ENCODE measurements at regions of chr11 and their contacts with region 1.

Region 1: DNA sequence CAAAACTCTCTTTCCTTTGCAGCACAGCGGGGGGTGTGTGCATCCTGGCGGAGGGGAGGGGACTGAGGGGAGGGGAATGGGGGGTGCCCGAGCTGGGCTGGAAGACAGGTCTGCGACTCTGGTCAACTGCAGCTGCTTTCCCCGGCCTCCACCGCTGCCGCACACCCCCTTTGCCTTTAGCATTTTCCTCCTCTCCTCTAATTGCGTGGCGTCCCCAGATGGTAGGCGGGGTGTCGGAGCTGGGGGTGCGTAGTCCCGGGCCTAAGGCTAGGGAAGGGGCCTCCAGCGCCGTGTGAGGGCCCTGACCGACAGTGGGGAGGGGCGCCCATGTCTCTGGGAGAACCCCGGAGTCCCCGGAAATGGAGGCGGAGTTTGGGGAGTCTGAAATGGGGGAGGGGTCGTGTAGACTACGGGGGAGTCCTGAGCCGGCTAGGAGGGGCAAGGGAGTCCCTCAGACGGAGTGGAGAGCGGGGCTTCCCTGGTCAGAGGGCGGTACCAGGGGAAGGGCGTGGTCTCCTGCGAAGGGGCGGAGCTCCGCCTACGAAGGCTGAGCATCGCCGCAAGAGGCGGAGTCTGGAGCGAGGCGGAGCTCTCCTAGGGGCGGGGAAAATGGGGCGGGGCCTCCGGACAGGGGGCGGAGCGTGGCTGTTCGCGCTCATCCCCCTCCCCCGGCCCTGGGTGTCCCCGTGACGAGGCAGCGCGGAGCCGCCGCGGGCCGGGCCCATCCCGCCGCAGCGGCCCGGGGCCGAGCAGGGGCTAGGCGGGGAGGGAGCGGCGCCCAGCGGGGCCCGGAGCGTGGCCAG is at the start of gene PELI3:
- DNase-seq: peak; percentile 86 to 95 (median 92)
- ATAC-seq: peak; percentile 97
- H3K4me3 ChIP-seq: peak within 1 kb of the TSS; percentile 78
- H3K4me3 Mint-ChIP-seq: peak within 1 kb of the TSS; percentile 89 to 96 (median 90)
- H3K27ac ChIP-seq: peak within 1 kb of the TSS; percentile 87
- H3K27ac Mint-ChIP-seq: peak within 1 kb of the TSS; percentile 87 to 97 (median 93)
- H3K4me1 ChIP-seq: peaks cover 8 to 10% of the 10 kb centered on the region in 2 donors
- H3K4me1 Mint-ChIP-seq: peaks cover 4 to 39% (median 24%) of the 10 kb centered on the region in 7 donors
- H3K27me3 ChIP-seq: no peaks in the 10 kb centered on the region
- H3K27me3 Mint-ChIP-seq: no peaks in the 10 kb centered on the region
- total RNA-seq, gene PELI3: 10.6 to 27.3 (median 18.6) TPM

Region 2: DNA sequence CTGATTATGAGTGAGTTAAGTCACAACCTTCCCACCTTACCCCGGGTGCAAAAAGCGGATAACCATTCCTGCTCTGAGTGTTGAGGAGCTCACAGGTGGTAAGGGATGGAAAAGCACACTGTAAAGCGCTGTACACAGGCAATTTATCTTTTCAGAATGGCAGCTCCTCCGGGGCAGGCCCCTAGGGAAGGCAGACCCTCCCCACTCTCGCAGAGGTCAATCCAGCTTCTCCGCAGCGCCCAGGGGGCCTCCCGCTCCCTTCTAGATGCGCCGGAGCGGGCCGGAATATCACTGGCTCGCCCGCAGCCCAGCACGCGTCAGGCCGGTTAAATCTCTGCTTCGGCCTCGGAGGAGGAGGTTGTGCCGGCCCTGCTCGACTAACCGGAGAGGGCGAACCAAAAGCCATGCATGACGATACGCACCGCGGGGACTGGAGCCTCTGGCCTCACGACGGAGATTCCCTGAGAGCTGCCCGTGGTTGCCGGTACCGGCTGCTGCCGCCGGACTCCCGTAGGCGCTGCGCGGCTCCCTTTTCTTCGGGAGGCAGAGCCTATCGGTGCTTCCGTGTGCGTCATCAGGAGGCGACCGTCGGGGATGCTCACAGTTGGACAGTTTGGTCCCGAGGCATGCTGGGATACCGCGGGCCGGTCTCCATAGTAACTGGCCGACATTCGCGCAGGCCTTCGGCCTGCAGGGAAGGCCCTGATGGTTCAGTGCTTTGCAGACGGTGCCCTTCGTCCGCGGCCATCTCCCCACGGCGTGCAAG is 121.7 kb before region 1 on chr11 and contains the start of gene BRMS1:
- CTCF ChIA-PET with region 1: no interaction called
- POLR2A ChIA-PET with region 1: no interaction called
- intact Hi-C with region 1: loop called in 1 of 2 experiments (anchors 1 kb)
- DNase-seq: peak; percentile 85 to 98 (median 93)
- ATAC-seq: peak; percentile 94
- H3K4me3 ChIP-seq: peak within 1 kb of the TSS; percentile 73
- H3K4me3 Mint-ChIP-seq: peak within 1 kb of the TSS; percentile 94 to 98 (median 96)
- H3K27ac ChIP-seq: peak within 1 kb of the TSS; percentile 92
- H3K27ac Mint-ChIP-seq: peak within 1 kb of the TSS; percentile 91 to 98 (median 96)
- H3K4me1 ChIP-seq: peaks cover 30 to 36% of the 10 kb centered on the region in 2 donors
- H3K4me1 Mint-ChIP-seq: peaks cover 25 to 62% (median 52%) of the 10 kb centered on the region in 7 donors
- H3K27me3 ChIP-seq: no peaks in the 10 kb centered on the region
- H3K27me3 Mint-ChIP-seq: peaks cover 0 to 4% (median 0%) of the 10 kb centered on the region in 5 donors
- total RNA-seq, gene BRMS1: 35.9 to 50.8 (median 48.4) TPM

Region 3: DNA sequence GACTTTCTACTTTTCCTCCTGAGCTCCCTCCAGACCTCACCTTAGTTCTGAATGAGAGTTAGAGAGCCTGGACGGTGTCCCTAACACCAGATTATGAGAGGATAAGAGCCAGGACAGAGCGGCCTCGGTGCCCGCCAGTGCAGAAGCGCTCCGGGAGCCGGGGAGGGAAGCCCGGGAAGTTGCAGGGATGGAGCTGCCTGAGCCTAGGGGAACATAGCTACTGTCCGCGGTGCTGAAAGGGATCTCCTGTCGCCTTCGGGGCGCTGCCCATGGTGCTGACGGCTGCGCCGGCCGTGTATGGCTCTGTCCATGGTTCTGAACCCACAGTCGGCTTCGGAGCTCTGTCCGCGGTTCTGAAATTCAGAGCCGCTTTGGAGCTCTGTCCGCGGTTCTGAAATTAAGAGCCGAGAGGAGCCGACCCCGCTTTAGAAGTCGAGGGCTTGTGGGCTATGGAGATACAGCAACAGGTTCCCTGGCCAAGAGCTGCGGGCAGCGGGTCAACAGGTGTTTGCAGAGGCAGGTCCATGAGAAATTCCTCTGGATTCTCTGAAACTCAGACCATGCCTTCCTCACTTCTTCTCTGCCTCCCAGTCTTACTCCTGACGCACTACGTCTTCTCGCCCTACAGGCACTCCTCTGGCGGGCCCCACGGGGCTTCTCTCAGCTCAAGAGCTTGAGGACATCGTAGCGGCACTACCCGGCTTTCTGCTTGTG is 44.8 kb before region 1 on chr11:
- CTCF ChIA-PET with region 1: no interaction called
- POLR2A ChIA-PET with region 1: interaction called, 4 read pairs
- intact Hi-C with region 1: loop called in 1 of 2 experiments (anchors 1 kb)
- DNase-seq: peak; percentile 79 to 94 (median 86)
- ATAC-seq: peak; percentile 100
- H3K4me3 ChIP-seq: no peak overlapping the region
- H3K4me3 Mint-ChIP-seq: peak overlapping the region in 4 of 10 donors; percentile 20 to 73 (median 41)
- H3K27ac ChIP-seq: no peak overlapping the region
- H3K27ac Mint-ChIP-seq: peak overlapping the region in 6 of 9 donors; percentile 31 to 85 (median 58)
- H3K4me1 ChIP-seq: no peaks in the 10 kb centered on the region
- H3K4me1 Mint-ChIP-seq: peaks cover 9 to 22% (median 10%) of the 10 kb centered on the region in 7 donors
- H3K27me3 ChIP-seq: peaks cover 7 to 22% of the 10 kb centered on the region in 2 donors
- H3K27me3 Mint-ChIP-seq: peaks cover 23 to 29% (median 29%) of the 10 kb centered on the region in 5 donors

Region 4: GRCh38 chr11:66545701-66546367 is 79.4 kb after region 1 on chr11 and contains the start of gene ZDHHC24:
- CTCF ChIA-PET with region 1: no interaction called
- POLR2A ChIA-PET with region 1: interaction called, 3 read pairs
- intact Hi-C with region 1: loop called (anchors 1 to 5 kb)
- DNase-seq: peak; percentile 60 to 94 (median 74)
- ATAC-seq: peak; percentile 86
- H3K4me3 ChIP-seq: peak within 1 kb of the TSS; percentile 78
- H3K4me3 Mint-ChIP-seq: peak within 1 kb of the TSS; percentile 79 to 92 (median 88)
- H3K27ac ChIP-seq: peak within 1 kb of the TSS; percentile 90
- H3K27ac Mint-ChIP-seq: peak within 1 kb of the TSS; percentile 67 to 95 (median 89)
- H3K4me1 ChIP-seq: peaks cover 19 to 21% of the 10 kb centered on the region in 2 donors
- H3K4me1 Mint-ChIP-seq: peaks cover 13 to 46% (median 33%) of the 10 kb centered on the region in 7 donors
- H3K27me3 ChIP-seq: no peaks in the 10 kb centered on the region
- H3K27me3 Mint-ChIP-seq: peaks cover 0 to 16% (median 0%) of the 10 kb centered on the region in 5 donors
- total RNA-seq, gene ZDHHC24: 14.5 to 24.5 (median 19.2) TPM

Region 5: DNA sequence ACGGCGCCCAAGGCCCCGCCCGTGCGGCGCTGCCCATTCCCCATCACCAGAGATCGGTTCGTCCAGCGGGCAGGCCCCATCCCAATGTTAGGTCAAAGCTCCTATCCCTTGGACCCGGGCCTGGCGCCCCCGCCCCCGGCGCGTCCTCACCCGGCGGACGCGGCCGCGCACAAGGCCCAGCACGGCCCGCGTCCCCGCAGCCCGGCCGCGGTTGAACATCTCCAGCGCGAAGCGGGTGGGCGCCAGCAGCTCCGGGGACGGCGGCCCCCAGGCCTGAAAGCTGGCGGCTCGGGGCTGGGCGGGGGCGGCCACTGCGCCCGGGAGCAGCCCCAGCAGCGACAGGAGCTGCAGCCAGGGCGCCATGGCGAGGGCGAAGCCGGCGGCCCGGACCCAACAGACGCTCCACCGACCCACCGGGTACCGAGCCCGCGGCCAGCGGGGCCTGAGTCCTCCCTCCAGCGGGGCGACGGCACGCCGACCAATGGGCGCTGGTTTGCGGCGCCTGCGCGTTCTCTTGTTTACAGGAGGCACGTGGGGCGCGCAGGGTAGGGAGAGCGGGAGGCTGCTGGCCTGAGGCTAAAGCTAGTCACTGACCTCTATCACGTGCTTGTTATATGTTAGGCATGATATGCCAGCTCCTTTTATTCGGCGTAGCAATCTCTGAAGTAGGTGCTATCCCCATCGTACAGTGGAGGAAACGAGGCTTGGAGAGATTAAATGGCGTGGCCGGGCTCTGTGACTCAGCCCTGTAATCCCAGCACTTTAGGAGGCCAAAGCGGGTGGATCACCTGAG is 101.9 kb after region 1 on chr11 and contains the start of gene CTSF:
- CTCF ChIA-PET with region 1: no interaction called
- POLR2A ChIA-PET with region 1: no interaction called
- intact Hi-C with region 1: no loop called
- DNase-seq: peak; percentile 55 to 72 (median 61)
- ATAC-seq: peak; percentile 93
- H3K4me3 ChIP-seq: peak within 1 kb of the TSS; percentile 65
- H3K4me3 Mint-ChIP-seq: peak within 1 kb of the TSS; percentile 77 to 89 (median 82)
- H3K27ac ChIP-seq: peak within 1 kb of the TSS; percentile 58
- H3K27ac Mint-ChIP-seq: peak within 1 kb of the TSS in 8 of 9 donors; percentile 77 to 90 (median 82)
- H3K4me1 ChIP-seq: peaks cover 0 to 6% of the 10 kb centered on the region in 2 donors
- H3K4me1 Mint-ChIP-seq: peaks cover 2 to 13% (median 8%) of the 10 kb centered on the region in 7 donors
- H3K27me3 ChIP-seq: no peaks in the 10 kb centered on the region
- H3K27me3 Mint-ChIP-seq: peaks cover 0 to 36% (median 0%) of the 10 kb centered on the region in 5 donors
- total RNA-seq, gene CTSF: 2.3 to 49.7 (median 21.1) TPM

Region 6: DNA sequence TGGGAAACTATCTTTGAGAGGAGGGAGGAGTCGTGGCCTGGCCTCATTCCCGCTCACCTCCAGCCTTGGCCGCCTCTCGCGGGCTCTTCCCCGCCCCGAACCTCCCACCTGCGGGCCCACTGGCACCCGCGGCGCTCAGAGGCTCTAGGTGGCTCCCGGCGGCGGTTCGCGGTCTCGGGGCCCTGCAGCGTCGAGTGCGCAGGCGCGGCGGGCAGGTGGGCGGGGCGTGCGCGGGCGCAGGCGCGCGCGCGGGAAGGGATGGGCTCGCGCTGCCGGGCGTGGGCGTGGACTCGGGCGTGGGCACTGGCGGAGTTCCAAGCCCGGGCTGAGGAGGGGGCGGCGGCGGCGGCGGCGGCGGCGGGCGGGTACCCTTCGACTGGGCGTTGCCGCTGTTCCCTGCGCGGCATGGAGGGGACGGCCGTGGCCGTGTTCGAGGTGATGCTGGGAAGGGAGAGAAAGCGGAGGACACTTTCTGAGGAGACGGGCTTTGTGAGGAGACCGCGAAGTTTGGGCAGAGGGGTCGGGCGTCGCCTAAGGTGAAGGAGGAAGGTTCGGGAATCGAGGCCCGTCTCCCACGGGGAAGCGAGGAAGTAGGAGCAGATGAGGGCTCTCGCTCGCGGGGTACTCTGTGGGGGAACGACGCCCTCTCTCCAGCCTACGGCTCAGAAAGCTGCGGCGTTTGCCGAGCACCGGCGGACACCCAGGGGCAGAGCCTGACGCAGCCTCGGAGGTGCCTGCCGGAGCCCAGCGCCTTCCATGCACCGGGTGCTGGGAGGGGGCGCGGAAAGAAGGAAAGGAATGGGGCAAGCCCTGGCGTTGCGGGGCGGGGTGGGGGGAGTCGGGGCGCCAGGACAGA is 278.3 kb after region 1 on chr11:
- CTCF ChIA-PET with region 1: no interaction called
- POLR2A ChIA-PET with region 1: no interaction called
- intact Hi-C with region 1: loop called in 1 of 2 experiments (anchors 1 kb)
- DNase-seq: peak; percentile 83 to 98 (median 91)
- ATAC-seq: peak; percentile 97
- H3K4me3 ChIP-seq: peak overlapping the region; percentile 83
- H3K4me3 Mint-ChIP-seq: peak overlapping the region; percentile 82 to 97 (median 94)
- H3K27ac ChIP-seq: peak overlapping the region; percentile 89
- H3K27ac Mint-ChIP-seq: peak overlapping the region; percentile 18 to 89 (median 81)
- H3K4me1 ChIP-seq: peaks cover 0 to 3% of the 10 kb centered on the region in 2 donors
- H3K4me1 Mint-ChIP-seq: peaks cover 0 to 16% (median 4%) of the 10 kb centered on the region in 7 donors
- H3K27me3 ChIP-seq: no peaks in the 10 kb centered on the region
- H3K27me3 Mint-ChIP-seq: peaks cover 0 to 10% (median 0%) of the 10 kb centered on the region in 5 donors

Region 7: GRCh38 chr11:66958232-66958955 is 492.0 kb after region 1 on chr11 and contains the start of gene PC:
- CTCF ChIA-PET with region 1: no interaction called
- POLR2A ChIA-PET with region 1: no interaction called
- intact Hi-C with region 1: loop called in 1 of 2 experiments (anchors 5 kb)
- DNase-seq: peak; percentile 83 to 98 (median 96)
- ATAC-seq: peak; percentile 98
- H3K4me3 ChIP-seq: peak within 1 kb of the TSS; percentile 81
- H3K4me3 Mint-ChIP-seq: peak within 1 kb of the TSS; percentile 82 to 95 (median 91)
- H3K27ac ChIP-seq: peak within 1 kb of the TSS; percentile 64
- H3K27ac Mint-ChIP-seq: peak within 1 kb of the TSS; percentile 76 to 93 (median 87)
- H3K4me1 ChIP-seq: peaks cover 8 to 19% of the 10 kb centered on the region in 2 donors
- H3K4me1 Mint-ChIP-seq: peaks cover 16 to 31% (median 27%) of the 10 kb centered on the region in 7 donors
- H3K27me3 ChIP-seq: no peaks in the 10 kb centered on the region
- H3K27me3 Mint-ChIP-seq: peaks cover 0 to 6% (median 0%) of the 10 kb centered on the region in 5 donors
- total RNA-seq, gene PC: 8.4 to 11.2 (median 10.0) TPM

Region 8: DNA sequence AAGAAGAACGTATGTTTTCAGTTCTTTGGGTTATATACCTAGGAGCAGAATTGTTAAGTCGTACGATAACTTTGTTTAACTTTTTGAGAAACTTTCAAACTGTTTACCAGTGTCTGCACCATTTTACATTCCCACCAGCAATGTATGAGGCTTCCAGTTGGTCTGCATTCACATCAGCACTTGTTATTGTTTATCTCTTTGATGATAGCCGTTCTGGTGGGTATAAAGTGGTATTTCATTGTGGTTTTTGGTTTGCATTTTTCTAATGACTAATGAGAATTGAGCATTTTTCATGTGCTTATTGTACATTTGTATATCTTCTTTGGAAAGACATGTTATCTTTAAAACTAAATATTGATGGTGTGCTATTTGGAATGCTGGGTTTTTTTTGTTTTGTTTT is 712.5 kb after region 1 on chr11:
- CTCF ChIA-PET with region 1: no interaction called
- POLR2A ChIA-PET with region 1: no interaction called
- intact Hi-C with region 1: no loop called
- DNase-seq: no peak
- ATAC-seq: no peak
- H3K4me3 ChIP-seq: no peak overlapping the region
- H3K4me3 Mint-ChIP-seq: no peak overlapping the region
- H3K27ac ChIP-seq: no peak overlapping the region
- H3K27ac Mint-ChIP-seq: no peak overlapping the region
- H3K4me1 ChIP-seq: no peaks in the 10 kb centered on the region
- H3K4me1 Mint-ChIP-seq: peaks cover 6 to 44% (median 28%) of the 10 kb centered on the region in 7 donors
- H3K27me3 ChIP-seq: no peaks in the 10 kb centered on the region
- H3K27me3 Mint-ChIP-seq: no peaks in the 10 kb centered on the region